ENCODE measurements at regions of chr10 and their contacts with region 1.

Region 1: GRCh38 chr10:103845972-103846371 is 9.4 kb downstream of the SH3PXD2A start:
- DNase-seq: no peak
- H3K4me3 ChIP-seq: no peak overlapping the region
- H3K27ac ChIP-seq: no peak overlapping the region
- H3K4me1 ChIP-seq: peaks cover 6 to 9% (median 7%) of the 10 kb centered on the region in 4 experiments; a peak in 6 of 7 replicates
- H3K27me3 ChIP-seq: no peaks in the 10 kb centered on the region
- CTCF ChIP-seq: no peak
- EP300 ChIP-seq: no peak
- POLR2A ChIP-seq: no peak
- RAD21 ChIP-seq: no peak

Region 2: DNA sequence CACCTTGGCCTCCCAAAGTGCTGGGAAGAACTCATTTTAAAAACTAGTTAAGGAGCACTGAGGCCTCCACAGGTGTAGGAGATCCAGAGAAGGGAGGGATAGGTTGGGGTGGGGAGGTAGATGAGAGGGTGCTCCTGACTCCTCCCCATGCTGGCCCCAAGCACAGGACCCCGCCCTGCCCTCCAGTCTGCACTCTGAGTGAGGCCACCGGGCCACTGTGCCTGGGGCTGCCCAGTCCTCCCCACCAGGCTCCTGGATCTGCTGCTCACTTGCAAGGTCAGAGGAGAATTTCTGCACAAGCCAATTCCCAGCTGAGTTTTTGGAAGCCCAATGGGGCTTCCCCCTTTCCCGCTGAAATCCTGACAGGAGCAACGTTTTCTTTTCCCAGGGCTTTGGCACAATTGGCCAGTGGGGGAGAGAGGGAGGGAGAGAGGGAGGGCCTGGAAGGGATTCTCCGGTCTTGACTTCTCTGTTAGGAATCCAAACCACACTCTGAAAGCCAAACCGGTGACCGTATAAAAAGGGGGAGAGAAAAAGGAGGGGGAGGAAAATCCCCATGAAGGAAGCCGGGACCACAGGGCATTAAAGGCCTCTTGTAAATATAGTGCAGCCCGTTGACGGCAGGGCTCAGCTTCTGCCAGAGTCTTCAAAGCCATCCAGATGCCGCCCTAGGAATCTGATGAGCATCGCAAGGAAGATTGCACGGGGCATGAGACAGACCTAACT is 106.8 kb before region 1 on chr10:
- CTCF ChIA-PET with region 1: interaction called, 11 read pairs
- POLR2A ChIA-PET with region 1: no interaction called
- DNase-seq: no peak
- H3K4me3 ChIP-seq: peak overlapping the region in 1 of 4 experiments; percentile 8; a peak in 2 of 8 replicates
- H3K27ac ChIP-seq: no peak overlapping the region
- H3K4me1 ChIP-seq: peaks cover 0 to 9% (median 2%) of the 10 kb centered on the region in 4 experiments; a peak in 3 of 7 replicates
- H3K27me3 ChIP-seq: no peaks in the 10 kb centered on the region
- CTCF ChIP-seq: no peak
- EP300 ChIP-seq: no peak
- POLR2A ChIP-seq: no peak
- RAD21 ChIP-seq: no peak

Region 3: GRCh38 chr10:103752680-103753248 is 93.2 kb before region 1 on chr10:
- CTCF ChIA-PET with region 1: interaction called, 29 read pairs
- POLR2A ChIA-PET with region 1: no interaction called
- DNase-seq: peak in 1 of 2 experiments; percentile 76
- H3K4me3 ChIP-seq: no peak overlapping the region
- H3K27ac ChIP-seq: no peak overlapping the region
- H3K4me1 ChIP-seq: peaks cover 4 to 11% (median 7%) of the 10 kb centered on the region in 4 experiments
- H3K27me3 ChIP-seq: no peaks in the 10 kb centered on the region
- CTCF ChIP-seq: peak in 2 of 3 experiments; percentile 46 to 73; a peak in 2 of 4 replicates
- EP300 ChIP-seq: no peak
- POLR2A ChIP-seq: no peak
- RAD21 ChIP-seq: peak; percentile 23 to 43; a peak in 2 of 4 replicates

Region 4: GRCh38 chr10:103789771-103790201 is 56.2 kb before region 1 on chr10:
- CTCF ChIA-PET with region 1: interaction called, 14 read pairs
- POLR2A ChIA-PET with region 1: no interaction called
- DNase-seq: no peak
- H3K4me3 ChIP-seq: no peak overlapping the region
- H3K27ac ChIP-seq: no peak overlapping the region
- H3K4me1 ChIP-seq: no peaks in the 10 kb centered on the region; a peak in 2 of 7 replicates
- H3K27me3 ChIP-seq: no peaks in the 10 kb centered on the region
- CTCF ChIP-seq: no peak
- EP300 ChIP-seq: no peak
- POLR2A ChIP-seq: no peak
- RAD21 ChIP-seq: no peak

Region 5: DNA sequence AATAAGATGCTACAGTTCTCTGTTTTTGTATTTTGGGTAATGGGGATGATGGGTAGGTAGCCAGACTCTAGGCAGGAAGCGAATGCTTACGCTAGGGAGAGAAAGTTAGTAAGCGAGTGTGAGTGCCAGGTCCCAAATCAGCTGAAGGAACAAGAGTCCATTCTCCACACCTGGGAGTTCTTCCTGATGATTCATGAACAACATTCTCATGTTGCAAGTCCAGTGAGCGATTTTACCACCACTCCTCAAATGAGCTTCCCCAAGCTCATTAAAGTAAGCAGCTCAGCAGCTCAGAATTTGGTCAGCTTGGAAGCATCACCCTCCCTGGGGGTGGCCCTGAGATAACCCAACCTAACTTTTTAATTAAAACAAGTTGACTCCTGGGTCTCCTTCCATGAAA is 17.9 kb before region 1 on chr10:
- CTCF ChIA-PET with region 1: interaction called, 20 read pairs
- POLR2A ChIA-PET with region 1: no interaction called
- DNase-seq: no peak
- H3K4me3 ChIP-seq: no peak overlapping the region
- H3K27ac ChIP-seq: no peak overlapping the region
- H3K4me1 ChIP-seq: peaks cover 0 to 7% (median 0%) of the 10 kb centered on the region in 4 experiments; a peak in 1 of 7 replicates
- H3K27me3 ChIP-seq: no peaks in the 10 kb centered on the region
- CTCF ChIP-seq: no peak
- EP300 ChIP-seq: no peak
- POLR2A ChIP-seq: no peak
- RAD21 ChIP-seq: no peak

Region 6: DNA sequence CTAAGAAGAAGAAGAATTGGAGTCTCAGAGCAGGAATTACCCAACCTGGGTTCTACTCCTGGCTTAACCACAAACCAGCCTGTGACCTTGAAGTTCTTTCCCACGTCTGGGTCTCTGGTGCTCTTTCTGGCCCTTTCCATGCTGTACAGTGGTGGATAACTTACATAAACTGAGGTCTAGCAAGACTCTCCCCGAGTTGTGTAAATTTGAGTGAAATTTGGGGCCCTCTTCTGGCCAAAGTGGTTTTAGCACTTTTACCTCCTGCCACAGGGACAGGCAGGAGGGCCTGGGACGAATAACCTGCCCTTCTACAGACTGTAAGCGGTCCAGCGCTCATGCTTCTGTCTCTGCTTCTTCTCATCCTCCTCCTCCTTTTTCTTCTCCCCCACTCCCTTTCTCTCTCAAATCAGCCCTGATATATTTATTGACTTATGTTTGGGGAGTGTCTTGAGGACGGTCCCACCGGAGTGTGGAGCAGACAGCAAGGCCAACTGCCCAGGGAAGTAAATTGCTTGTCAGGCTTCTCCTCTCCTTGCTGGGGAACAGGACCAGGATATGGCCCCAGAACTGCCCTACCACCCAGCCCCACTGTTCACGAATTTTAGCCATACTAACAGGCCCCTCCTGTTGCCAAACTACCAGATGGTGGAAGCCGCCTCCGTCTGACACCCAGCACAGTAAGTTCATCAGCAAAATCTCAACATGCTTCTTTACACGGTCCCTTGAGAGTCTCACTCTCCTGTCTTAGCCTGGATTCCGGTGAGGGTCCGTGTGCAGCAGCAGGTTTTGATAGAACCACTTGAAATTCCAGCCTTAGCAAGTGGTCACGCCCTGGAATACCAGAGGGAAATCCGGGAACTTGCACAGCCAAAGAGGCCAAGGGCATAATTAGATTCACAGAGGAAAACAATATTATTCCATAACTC is 13.5 kb after region 1 on chr10:
- CTCF ChIA-PET with region 1: interaction called, 16 read pairs
- POLR2A ChIA-PET with region 1: interaction called, 6 read pairs
- DNase-seq: peak; percentile 46 to 84
- H3K4me3 ChIP-seq: no peak overlapping the region
- H3K27ac ChIP-seq: no peak overlapping the region
- H3K4me1 ChIP-seq: peaks cover 0 to 6% (median 3%) of the 10 kb centered on the region in 4 experiments; a peak in 5 of 7 replicates
- H3K27me3 ChIP-seq: peaks cover 0 to 21% (median 15%) of the 10 kb centered on the region in 4 experiments; a peak in 5 of 7 replicates
- CTCF ChIP-seq: peak; percentile 39 to 77 (median 77)
- EP300 ChIP-seq: no peak
- POLR2A ChIP-seq: no peak
- RAD21 ChIP-seq: peak; percentile 73 to 84

Measured in H1 (cell line).